ENCODE measurements at regions of chr18 and their contacts with region 1.

Region 1: GRCh38 chr18:32092422-32093101 is 888 bp downstream of the RNF138 start:
- DNase-seq: peak; percentile 99
- H3K4me3 ChIP-seq: peak overlapping the region; percentile 75 to 93 (median 86)
- H3K27ac ChIP-seq: peak overlapping the region; percentile 99 to 100 (median 100)
- H3K4me1 ChIP-seq: peaks cover 27 to 49% (median 49%) of the 10 kb centered on the region in 4 donors
- H3K27me3 ChIP-seq: no peaks in the 10 kb centered on the region
- CTCF ChIP-seq: no peak
- EP300 ChIP-seq: no peak
- POLR2A ChIP-seq: peak; percentile 23

Region 2: GRCh38 chr18:31942999-31943865 is 149.3 kb before region 1 on chr18 and contains the start of gene TRAPPC8:
- intact Hi-C with region 1: loop called (anchors 5 kb)
- DNase-seq: peak; percentile 99
- H3K4me3 ChIP-seq: peak within 1 kb of the TSS; percentile 73 to 95 (median 87)
- H3K27ac ChIP-seq: peak within 1 kb of the TSS; percentile 86 to 96 (median 91)
- H3K4me1 ChIP-seq: peaks cover 23 to 46% (median 42%) of the 10 kb centered on the region in 4 donors
- H3K27me3 ChIP-seq: no peaks in the 10 kb centered on the region
- CTCF ChIP-seq: peak in 1 of 3 experiments; percentile 9
- EP300 ChIP-seq: no peak
- POLR2A ChIP-seq: peak; percentile 11
- total RNA-seq, gene TRAPPC8: 35.0 to 49.4 (median 42.5) TPM

Region 3: DNA sequence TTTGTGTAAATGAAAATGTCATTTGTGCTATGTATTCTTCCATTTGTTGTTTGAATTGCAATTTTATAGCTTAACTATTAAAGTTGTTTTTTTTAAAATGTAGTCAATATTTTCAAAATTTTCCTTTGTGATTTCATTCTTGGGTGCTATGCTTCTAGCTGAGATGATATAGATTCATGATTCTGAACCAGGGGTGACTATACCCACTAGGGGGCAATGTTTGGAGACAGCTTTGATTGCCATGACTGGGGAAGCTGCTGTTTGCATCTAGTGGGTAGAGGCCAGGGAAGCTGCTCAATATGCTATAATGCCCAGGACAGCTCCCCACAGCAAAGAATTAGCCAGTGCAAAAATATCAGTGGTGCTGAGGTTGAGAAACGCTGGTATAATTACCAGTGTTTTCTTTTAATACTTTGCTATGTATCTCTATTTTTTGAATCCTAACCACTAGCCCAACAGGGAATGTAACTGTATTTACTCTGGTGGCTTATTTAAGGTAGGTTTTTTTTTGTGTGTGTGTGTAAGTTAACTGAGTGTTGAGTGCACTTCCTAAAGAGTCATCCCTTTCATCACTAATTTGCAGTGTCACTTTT is 197.0 kb after region 1 on chr18:
- intact Hi-C with region 1: loop called (anchors 10 kb)
- DNase-seq: no peak
- H3K4me3 ChIP-seq: no peak overlapping the region
- H3K27ac ChIP-seq: no peak overlapping the region
- H3K4me1 ChIP-seq: peaks cover 0 to 4% (median 0%) of the 10 kb centered on the region in 4 donors
- H3K27me3 ChIP-seq: no peaks in the 10 kb centered on the region
- CTCF ChIP-seq: peak; percentile 52 to 71 (median 62)
- EP300 ChIP-seq: no peak
- POLR2A ChIP-seq: no peak

Measured in esophagus muscularis mucosa (tissue), 4 donors.